Head of caudate nucleus (tissue), 42 donors: ENCODE measurements at regions of chr9 and their contacts with region 1.

Region 1: DNA sequence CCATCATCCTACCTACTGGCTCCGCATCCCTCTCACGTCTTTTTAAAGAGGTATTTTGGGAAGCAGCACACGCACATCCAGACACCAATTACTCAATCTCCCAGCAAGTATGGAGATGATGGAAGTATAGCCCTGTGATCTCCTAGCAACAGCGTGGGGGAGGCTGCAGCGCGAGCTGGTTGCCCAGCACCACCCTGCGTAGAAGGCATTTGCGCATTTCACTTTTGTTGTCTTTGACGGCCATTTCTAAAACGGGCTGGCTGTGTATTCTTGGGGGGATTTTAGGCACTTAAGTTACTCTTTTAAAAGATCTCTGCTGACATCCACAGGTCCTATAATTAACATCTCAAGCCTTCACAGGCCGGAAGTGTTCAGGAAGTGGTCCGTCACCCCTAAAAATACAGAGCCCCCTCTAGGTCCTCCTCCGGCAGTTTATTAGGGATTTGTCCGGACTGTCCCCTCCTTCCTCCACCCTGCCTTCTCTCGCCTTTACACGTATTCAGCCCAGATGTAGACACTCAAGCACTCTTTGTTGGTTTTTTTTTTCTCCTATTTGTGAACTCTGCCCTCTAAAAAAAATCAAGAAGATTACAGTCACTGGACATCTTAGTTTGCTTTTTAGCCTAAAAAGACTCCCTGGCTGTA is 371.4 kb downstream of the NTRK2 start:
- DNase-seq: peak; percentile 70 to 94 (median 84)

Region 2: GRCh38 chr9:84953797-84954705 is 86.9 kb before region 1 on chr9:
- intact Hi-C with region 1: no loop called
- DNase-seq: peak; percentile 75 to 96 (median 89)

Region 3: DNA sequence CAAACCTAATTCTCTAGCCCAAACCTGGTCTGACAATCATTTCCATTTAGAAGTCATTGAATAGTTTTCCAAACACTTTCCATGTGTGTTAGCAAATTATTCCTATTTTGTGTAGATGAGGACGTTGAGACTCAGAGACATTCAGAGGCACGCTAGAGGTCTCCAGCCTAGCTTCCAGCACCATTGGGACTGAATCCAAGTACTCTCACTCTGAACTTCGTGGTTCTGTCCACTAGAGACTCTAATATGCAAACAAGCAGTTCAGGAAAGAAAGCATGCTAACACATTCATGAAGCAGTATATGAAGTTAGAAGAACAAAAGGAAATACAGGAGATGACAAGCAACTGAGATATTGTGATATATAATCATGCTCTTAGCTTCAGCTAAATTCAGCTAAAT is 16.6 kb before region 1 on chr9:
- intact Hi-C with region 1: loop called (anchors 2 kb)
- DNase-seq: peak in 33 of 42 donors; percentile 27 to 82 (median 63)